HCT116 (cell line): ENCODE measurements at regions of chr6 and their contacts with region 1.

Region 1: GRCh38 chr6:109526905-109527628 is 44.0 kb upstream of the ZBTB24 start:
- DNase-seq: peak; percentile 69
- ATAC-seq: peak; percentile 96
- H3K4me3 ChIP-seq: no peak overlapping the region
- H3K27ac ChIP-seq: no peak overlapping the region
- H3K4me1 ChIP-seq: no peaks in the 10 kb centered on the region
- H3K27me3 ChIP-seq: no peaks in the 10 kb centered on the region
- CTCF ChIP-seq: peak; percentile 58 to 80 (median 78)
- POLR2A ChIP-seq: no peak
- RAD21 ChIP-seq: peak; percentile 86

Region 2: GRCh38 chr6:109455502-109456282 is 71.4 kb before region 1 on chr6 and contains the start of gene MICAL1:
- CTCF ChIA-PET with region 1: no interaction called
- POLR2A ChIA-PET with region 1: no interaction called
- RAD21 ChIA-PET with region 1: no interaction called
- intact Hi-C with region 1: no loop called
- DNase-seq: no peak
- ATAC-seq: peak; percentile 91
- H3K4me3 ChIP-seq: peak within 1 kb of the TSS; percentile 82 to 85
- H3K27ac ChIP-seq: peak within 1 kb of the TSS; percentile 77
- H3K4me1 ChIP-seq: peaks cover 4 to 43% of the 10 kb centered on the region in 2 experiments; a peak in 3 of 4 replicates
- H3K27me3 ChIP-seq: no peaks in the 10 kb centered on the region
- CTCF ChIP-seq: peak in 1 of 3 experiments; percentile 46; a peak in 2 of 6 replicates
- POLR2A ChIP-seq: no peak
- RAD21 ChIP-seq: no peak
- total RNA-seq, gene MICAL1: 23.9 TPM

Region 3: DNA sequence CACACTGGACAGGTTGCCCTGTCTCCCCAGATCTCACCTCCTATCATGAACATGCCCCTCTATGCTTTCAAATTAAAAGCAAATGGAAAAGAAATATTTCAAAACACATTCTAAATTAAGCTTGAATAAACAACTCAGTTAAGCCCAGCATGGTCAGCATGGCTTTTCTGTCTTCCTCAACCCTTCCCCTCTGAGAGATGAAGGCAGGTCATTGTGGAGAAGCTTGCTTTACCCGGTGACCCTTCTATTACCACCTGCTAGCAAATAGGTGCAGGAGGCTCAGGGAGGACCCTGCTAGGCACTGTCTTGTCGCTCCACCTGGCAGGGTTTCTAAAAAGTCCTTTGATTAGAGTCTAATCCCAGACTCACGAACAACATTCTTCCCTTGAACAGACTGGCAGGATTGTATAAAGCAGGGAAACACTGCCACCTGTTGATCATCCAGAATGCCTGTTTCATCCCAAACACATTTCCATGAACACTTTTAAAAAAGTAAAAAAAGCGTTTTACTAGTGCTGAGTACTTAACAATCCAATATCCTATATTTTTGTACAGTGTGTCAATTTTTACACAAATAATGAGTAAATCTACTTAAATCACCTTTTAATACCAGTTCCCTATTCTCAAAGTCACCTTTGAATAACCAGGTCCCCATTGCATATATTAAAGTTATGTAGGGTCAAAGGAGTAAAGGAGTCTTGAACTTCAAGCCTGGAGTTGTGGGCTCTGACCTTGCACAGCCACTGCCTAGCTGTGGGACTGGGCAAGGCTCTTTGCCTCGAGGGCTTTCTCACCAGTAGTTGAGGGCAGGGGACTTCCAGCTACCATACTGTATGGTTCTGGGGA is 526.6 kb after region 1 on chr6:
- CTCF ChIA-PET with region 1: no interaction called
- POLR2A ChIA-PET with region 1: no interaction called
- RAD21 ChIA-PET with region 1: no interaction called
- intact Hi-C with region 1: loop called (anchors 1 kb)
- DNase-seq: peak; percentile 40
- ATAC-seq: peak; percentile 81
- H3K4me3 ChIP-seq: no peak overlapping the region
- H3K27ac ChIP-seq: no peak overlapping the region
- H3K4me1 ChIP-seq: no peaks in the 10 kb centered on the region
- H3K27me3 ChIP-seq: peaks cover 4% of the 10 kb centered on the region; the same call in 1 of the 2 replicates
- CTCF ChIP-seq: peak; percentile 73 to 87 (median 82)
- POLR2A ChIP-seq: no peak
- RAD21 ChIP-seq: peak; percentile 86